ENCODE measurements at regions of chr9 and their contacts with region 1.

Region 1: GRCh38 chr9:133184962-133185361 is 21.2 kb upstream of the GBGT1 start:
- DNase-seq: peak; percentile 69 to 83 (median 70)
- ATAC-seq: peak; percentile 86
- H3K4me3 ChIP-seq: no peak overlapping the region
- H3K27ac ChIP-seq: no peak overlapping the region
- H3K4me1 ChIP-seq: peaks cover 4 to 15% of the 10 kb centered on the region in 2 experiments; a peak in 3 of 5 replicates
- H3K27me3 ChIP-seq: peaks cover 19 to 34% of the 10 kb centered on the region in 2 experiments; a peak in 4 of 5 replicates
- CTCF ChIP-seq: peak; percentile 71 to 88 (median 86)
- EP300 ChIP-seq: no peak
- POLR2A ChIP-seq: no peak
- RAD21 ChIP-seq: peak; percentile 63 to 84

Region 2: GRCh38 chr9:133238851-133239532 is 54.0 kb after region 1 on chr9:
- CTCF ChIA-PET with region 1: no interaction called
- POLR2A ChIA-PET with region 1: no interaction called
- in situ Hi-C with region 1: no loop called
- intact Hi-C with region 1: loop called (anchors 5 kb)
- DNase-seq: peak; percentile 91 to 93 (median 92)
- ATAC-seq: peak; percentile 91
- H3K4me3 ChIP-seq: peak overlapping the region; percentile 40
- H3K27ac ChIP-seq: peak overlapping the region; percentile 64
- H3K4me1 ChIP-seq: peaks cover 6 to 39% of the 10 kb centered on the region in 2 experiments
- H3K27me3 ChIP-seq: no peaks in the 10 kb centered on the region
- CTCF ChIP-seq: peak; percentile 95 to 99 (median 97)
- EP300 ChIP-seq: no peak
- POLR2A ChIP-seq: no peak
- RAD21 ChIP-seq: peak; percentile 75 to 77

Region 3: DNA sequence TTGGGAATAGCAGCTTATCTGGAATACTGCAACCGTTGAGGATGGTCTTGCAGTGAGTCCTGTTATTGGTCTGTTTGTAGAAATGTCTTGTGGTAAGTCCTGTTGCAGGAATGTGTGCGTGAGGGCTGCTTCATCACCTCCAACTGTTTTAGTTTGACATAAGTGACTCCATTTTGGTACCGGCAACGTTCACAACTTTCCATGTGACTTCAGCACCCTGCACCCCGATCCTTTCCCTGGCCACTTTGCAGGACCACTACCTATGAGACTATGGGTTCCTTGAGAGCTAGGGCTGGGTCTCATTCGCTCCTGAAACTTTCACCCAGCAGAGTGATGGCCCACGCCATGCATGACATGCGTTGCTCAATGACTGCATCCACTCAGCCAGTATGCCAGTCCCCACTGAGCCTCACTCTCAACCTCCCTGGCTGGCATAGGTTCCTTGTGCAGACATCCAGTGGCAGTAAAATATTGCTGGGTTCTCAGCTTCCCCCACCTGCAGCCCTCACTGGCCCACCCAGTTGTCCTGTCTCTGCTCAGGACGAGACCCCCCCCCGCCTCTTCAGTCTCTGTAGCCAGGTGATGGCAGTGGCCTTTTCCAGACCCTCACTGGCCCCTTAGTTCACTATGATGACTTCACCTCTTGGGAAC is 143.0 kb after region 1 on chr9:
- CTCF ChIA-PET with region 1: interaction called, 31 read pairs
- POLR2A ChIA-PET with region 1: interaction called, 10 read pairs
- in situ Hi-C with region 1: loop called (anchors 5 kb)
- intact Hi-C with region 1: loop called (anchors 1 kb)
- DNase-seq: no peak
- ATAC-seq: no peak
- H3K4me3 ChIP-seq: no peak overlapping the region
- H3K27ac ChIP-seq: no peak overlapping the region
- H3K4me1 ChIP-seq: peaks cover 0 to 19% of the 10 kb centered on the region in 2 experiments; a peak in 2 of 5 replicates
- H3K27me3 ChIP-seq: peaks cover 0 to 8% of the 10 kb centered on the region in 2 experiments; a peak in 1 of 5 replicates
- CTCF ChIP-seq: no peak
- EP300 ChIP-seq: no peak
- POLR2A ChIP-seq: no peak
- RAD21 ChIP-seq: no peak

Region 4: DNA sequence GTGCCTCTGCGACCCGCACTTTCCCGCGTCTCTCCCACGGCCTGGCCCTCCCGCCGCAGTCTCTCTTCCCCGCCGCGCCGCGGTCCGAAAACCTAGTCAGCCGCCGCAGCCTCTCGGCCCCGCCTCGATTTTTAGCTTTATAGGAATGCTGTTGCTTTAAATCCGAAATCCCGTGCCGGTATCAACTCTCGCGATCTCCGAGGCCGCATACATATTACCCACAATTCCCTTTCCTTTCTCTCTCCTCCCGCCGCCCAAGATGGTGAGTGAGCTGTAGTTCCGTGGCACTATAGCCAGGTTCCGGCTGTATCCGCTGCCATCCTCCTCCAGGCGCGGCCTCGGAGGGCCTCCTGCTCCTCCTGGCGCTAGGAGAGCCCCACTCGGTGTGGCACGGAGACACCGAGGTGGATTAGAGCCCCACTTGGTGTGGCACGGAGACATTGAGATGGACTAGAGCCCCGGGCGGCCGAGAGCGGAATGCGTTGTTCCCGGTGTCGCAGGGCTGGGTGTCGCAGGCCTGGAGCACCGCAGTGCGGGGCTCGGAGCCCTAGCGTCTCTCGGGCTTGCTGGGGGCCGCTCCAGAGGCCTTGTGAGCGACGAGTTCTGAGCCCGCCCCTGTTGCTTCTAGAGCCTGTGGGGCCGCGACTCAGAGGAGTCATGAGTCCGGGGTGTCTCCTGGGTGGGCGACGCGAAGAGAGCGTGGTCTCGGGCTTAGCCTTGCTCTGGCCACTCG is 163.2 kb after region 1 on chr9 and contains the starts of genes MED22 and RPL7A:
- CTCF ChIA-PET with region 1: no interaction called
- POLR2A ChIA-PET with region 1: interaction called, 12 read pairs
- in situ Hi-C with region 1: no loop called
- intact Hi-C with region 1: no loop called
- DNase-seq: peak; percentile 72 to 96 (median 85)
- ATAC-seq: peak; percentile 77
- H3K4me3 ChIP-seq: peak within 1 kb of the TSS; percentile 100
- H3K27ac ChIP-seq: peak within 1 kb of the TSS; percentile 98
- H3K4me1 ChIP-seq: peaks cover 16 to 31% of the 10 kb centered on the region in 2 experiments; a peak in 4 of 5 replicates
- H3K27me3 ChIP-seq: no peaks in the 10 kb centered on the region
- CTCF ChIP-seq: peak in 1 of 3 experiments; percentile 16; a peak in 1 of 6 replicates
- EP300 ChIP-seq: no peak
- POLR2A ChIP-seq: peak; percentile 99
- RAD21 ChIP-seq: no peak
- polyA plus RNA-seq, gene MED22: 0.73 to 1.4 TPM
- polyA plus RNA-seq, gene RPL7A: 1,935 to 2,418 TPM